MCF 10A (cell line): ENCODE measurements at regions of chr5 and their contacts with region 1.

Region 1: DNA sequence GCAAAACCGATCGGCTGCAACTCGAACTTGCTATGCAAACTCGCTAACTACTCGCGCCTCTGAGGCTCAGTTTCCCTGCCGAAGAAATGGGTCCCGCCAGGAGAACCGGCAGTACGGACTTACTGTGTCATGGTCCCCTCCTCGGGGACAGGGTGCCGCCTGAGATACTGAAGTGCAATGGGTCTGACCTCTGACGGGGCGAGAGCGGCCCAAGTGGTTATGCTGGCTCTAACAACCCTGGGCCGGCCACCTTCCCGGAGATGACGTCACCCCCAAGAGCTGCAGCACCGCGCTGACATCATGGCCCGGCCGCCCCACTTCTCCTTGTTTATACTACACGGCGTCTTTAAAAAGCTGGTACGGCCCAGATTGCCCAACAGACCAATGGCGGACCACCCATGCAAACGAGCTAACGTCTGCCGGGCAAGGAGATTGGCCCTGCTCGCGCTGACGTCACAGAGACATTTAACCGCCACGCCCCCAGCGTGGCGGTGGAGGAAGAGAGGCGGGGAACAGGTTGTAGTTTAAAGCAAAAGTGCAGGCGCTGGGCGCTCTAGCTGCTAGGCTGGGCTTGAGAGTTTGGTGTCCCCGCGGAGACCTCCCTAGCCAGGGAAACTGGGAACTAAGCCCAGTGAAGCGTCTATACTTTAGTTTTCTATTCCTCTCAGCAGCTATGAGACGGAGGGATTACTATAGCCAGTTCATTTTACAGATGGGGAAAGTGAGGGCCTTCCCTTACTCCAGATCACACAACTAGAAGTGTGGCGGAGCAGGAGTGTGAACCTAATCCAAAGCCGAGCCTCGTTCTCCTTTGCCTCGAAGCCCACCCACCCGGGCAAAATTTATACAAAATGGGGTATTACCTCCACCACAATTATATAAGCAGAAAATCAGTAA is 654 bp upstream of the RNF44 start:
- DNase-seq: peak; percentile 100
- H3K4me3 Mint-ChIP-seq: peak overlapping the region; percentile 91
- H3K27ac Mint-ChIP-seq: peak overlapping the region; percentile 98
- H3K4me1 Mint-ChIP-seq: peaks cover 56% of the 10 kb centered on the region
- H3K27me3 Mint-ChIP-seq: no peaks in the 10 kb centered on the region
- CTCF ChIP-seq: no peak

Region 2: DNA sequence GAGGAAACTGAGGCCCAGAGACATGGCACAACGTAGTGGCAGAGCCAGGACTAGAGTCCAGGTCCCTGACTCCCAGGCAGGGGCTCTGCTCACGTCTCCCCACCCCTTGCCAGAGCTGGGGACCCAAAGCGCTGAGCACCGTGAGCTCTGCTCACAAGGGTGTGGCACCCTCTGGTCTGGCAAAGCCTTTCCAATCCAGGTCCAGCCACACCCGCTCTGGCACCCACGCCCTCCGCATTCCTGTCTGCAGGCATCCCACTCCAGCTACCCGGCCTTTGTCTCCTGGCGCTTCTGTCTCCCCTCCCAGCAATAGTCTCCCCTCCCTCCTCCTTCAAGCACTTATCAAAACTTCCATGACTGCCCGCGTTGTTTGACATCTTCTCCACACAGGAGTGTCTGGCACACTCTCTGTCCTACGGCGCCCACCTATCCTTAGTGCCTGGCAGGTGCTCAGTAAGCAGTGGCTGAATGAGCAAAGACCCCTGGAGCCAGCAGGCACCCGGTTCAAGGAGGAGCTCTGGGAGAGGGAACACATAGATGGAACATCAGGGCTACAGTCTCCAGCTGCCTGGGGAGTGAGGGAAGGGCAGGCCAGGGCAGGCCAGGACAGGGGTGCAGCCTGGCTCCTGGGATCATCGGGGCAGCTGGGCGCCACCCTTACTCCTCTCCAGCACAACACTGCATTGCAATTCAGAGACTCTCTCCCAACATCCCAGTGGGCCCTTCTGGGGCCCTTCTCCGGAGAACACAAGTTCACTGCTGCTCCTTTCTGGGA is 137.3 kb before region 1 on chr5:
- CTCF ChIA-PET with region 1: interaction called, 4 read pairs
- POLR2A ChIA-PET with region 1: interaction called, 12 read pairs
- intact Hi-C with region 1: no loop called
- DNase-seq: peak; percentile 48
- H3K4me3 Mint-ChIP-seq: peak overlapping the region; percentile 38
- H3K27ac Mint-ChIP-seq: peak overlapping the region; percentile 78
- H3K4me1 Mint-ChIP-seq: peaks cover 29% of the 10 kb centered on the region
- H3K27me3 Mint-ChIP-seq: no peaks in the 10 kb centered on the region
- CTCF ChIP-seq: no peak

Region 3: DNA sequence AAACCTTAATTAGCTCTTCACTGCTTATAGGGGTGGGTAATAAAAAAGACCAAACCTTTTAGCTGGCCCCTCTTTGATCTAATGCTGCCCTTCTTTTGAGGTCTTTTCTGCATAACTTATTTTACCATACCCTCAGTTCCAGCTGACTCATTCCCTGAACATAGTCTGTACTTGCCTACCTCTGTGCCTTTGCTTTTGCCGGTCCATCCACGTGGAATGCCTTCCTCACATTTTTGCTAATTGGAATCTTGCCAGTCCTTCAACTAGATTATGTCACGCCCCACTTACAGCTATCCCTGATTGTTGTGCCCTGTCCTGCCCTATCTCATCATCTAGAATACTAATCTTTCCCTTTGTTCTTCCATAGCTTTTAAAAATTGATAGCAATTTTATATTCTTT is 45.4 kb before region 1 on chr5:
- CTCF ChIA-PET with region 1: interaction called, 5 read pairs
- POLR2A ChIA-PET with region 1: interaction called, 154 read pairs
- intact Hi-C with region 1: loop called (anchors 1 kb)
- DNase-seq: peak; percentile 86
- H3K4me3 Mint-ChIP-seq: peak overlapping the region; percentile 17
- H3K27ac Mint-ChIP-seq: peak overlapping the region; percentile 63
- H3K4me1 Mint-ChIP-seq: peaks cover 30% of the 10 kb centered on the region
- H3K27me3 Mint-ChIP-seq: no peaks in the 10 kb centered on the region
- CTCF ChIP-seq: no peak

Region 4: GRCh38 chr5:176527246-176528222 is 10.3 kb before region 1 on chr5:
- CTCF ChIA-PET with region 1: interaction called, 7 read pairs
- POLR2A ChIA-PET with region 1: interaction called, 67 read pairs
- intact Hi-C with region 1: no loop called
- DNase-seq: no peak
- H3K4me3 Mint-ChIP-seq: no peak overlapping the region
- H3K27ac Mint-ChIP-seq: no peak overlapping the region
- H3K4me1 Mint-ChIP-seq: peaks cover 7% of the 10 kb centered on the region
- H3K27me3 Mint-ChIP-seq: no peaks in the 10 kb centered on the region
- CTCF ChIP-seq: no peak

Region 5: GRCh38 chr5:176573564-176574296 is 35.9 kb after region 1 on chr5:
- CTCF ChIA-PET with region 1: interaction called, 19 read pairs
- POLR2A ChIA-PET with region 1: interaction called, 18 read pairs
- intact Hi-C with region 1: loop called (anchors 2 kb)
- DNase-seq: peak; percentile 77
- H3K4me3 Mint-ChIP-seq: no peak overlapping the region
- H3K27ac Mint-ChIP-seq: no peak overlapping the region
- H3K4me1 Mint-ChIP-seq: peaks cover 14% of the 10 kb centered on the region
- H3K27me3 Mint-ChIP-seq: peaks cover 18% of the 10 kb centered on the region
- CTCF ChIP-seq: peak; percentile 94